Dorsolateral prefrontal cortex (tissue), 120 donors: ENCODE measurements at regions of chr12 and their contacts with region 1.

Region 1: GRCh38 chr12:57983146-57983857 is 41.9 kb downstream of the ATP23 start:
- DNase-seq: peak in 4 of 10 donors; percentile 5 to 54 (median 30)
- H3K4me3 ChIP-seq: no peak overlapping the region
- H3K27ac ChIP-seq: no peak overlapping the region
- H3K27me3 ChIP-seq: no peaks in the 10 kb centered on the region
- CTCF ChIP-seq: peak; percentile 45 to 85 (median 66)

Region 2: DNA sequence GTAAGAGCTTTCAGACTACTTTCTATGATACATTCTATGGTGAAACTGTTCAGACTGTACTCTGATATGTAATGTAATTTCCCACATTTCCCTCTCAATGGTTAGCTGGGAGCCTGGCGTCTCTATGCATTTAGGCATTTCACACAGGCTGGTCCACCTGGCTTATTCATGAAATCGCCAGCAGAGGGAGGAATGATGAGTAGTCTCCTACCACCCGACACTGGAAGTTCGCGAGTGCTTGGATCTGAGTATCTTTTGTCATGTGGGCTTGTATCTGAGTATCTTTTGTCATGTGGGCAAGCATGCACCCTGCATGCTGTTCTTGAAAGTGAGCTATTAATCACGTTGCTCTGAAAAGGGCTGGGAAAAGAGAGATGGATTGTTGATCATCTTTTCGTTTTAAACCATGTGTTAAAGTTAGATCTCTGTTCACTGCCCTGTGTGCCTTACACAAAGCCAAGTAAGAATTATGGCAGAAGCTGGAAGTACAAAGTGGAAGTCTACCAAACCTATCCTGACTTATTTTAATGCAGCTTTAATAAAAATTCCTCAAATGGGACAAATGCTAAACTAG is 193.1 kb after region 1 on chr12:
- intact Hi-C with region 1: no loop called
- DNase-seq: peak in 1 of 10 donors; percentile 29
- H3K4me3 ChIP-seq: no peak overlapping the region
- H3K27ac ChIP-seq: no peak overlapping the region
- H3K27me3 ChIP-seq: peaks cover 0 to 16% (median 0%) of the 10 kb centered on the region in 45 donors
- CTCF ChIP-seq: peak in 34 of 56 donors; percentile 15 to 58 (median 42)

Region 3: DNA sequence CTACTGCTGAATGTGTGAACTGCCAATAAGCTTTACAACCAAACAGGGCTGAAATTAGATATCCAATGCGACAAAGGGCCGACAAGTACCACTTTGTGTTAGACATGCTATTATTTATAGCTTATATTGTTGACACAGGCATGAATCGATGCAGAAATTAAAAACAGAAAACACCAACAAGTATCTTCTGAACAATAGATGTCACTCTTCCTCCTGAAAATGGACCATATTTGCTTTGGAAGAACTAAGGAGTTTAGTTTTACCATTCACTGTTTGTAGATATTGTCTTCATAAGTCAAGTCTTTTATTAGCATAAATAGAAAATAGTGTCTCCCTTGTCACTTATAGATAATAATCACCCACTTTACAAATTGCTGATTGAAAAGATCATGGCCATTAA is 850.6 kb after region 1 on chr12:
- intact Hi-C with region 1: loop called in 1 of 2 experiments (anchors 10 kb)
- DNase-seq: no peak
- H3K4me3 ChIP-seq: no peak overlapping the region
- H3K27ac ChIP-seq: no peak overlapping the region
- H3K27me3 ChIP-seq: no peaks in the 10 kb centered on the region
- CTCF ChIP-seq: peak in 51 of 56 donors; percentile 7 to 76 (median 46)